GM13976 (cell line): ENCODE measurements at regions of chr4 and their contacts with region 1.

Region 1: DNA sequence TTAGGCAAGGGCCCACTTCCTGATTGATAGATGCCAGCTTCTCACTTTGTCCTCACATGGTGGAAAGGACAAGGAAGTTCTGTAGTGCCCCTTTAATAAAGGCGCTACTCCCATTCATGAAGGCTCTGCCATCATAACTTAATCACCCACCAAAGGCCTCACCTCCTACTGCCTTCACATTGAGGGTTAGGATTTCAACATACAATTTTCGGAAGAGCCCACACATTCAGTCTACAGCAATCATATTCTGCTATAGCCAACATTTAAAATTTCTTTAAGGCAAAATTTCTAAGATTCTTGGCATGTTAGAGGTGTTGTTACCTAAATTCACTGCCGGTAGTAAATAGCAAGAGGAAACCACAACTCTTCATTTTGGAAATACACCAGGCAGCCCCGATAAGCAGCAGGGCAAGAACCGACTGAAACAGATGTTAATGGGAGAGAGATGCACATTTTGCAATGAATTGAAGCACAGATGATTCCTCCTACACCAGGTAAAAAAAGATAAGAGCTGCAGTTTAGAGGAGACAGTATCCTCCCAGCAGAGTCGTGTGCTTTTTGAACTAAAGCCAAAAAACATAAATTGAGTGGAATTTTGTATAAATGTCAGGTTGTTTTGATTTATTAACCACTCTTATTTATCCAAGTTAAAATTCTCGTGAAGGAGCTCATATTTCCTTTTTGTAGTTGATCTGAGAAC is 594.9 kb downstream of the KCTD8 start:
- DNase-seq: no peak
- CTCF ChIP-seq: no peak

Region 2: DNA sequence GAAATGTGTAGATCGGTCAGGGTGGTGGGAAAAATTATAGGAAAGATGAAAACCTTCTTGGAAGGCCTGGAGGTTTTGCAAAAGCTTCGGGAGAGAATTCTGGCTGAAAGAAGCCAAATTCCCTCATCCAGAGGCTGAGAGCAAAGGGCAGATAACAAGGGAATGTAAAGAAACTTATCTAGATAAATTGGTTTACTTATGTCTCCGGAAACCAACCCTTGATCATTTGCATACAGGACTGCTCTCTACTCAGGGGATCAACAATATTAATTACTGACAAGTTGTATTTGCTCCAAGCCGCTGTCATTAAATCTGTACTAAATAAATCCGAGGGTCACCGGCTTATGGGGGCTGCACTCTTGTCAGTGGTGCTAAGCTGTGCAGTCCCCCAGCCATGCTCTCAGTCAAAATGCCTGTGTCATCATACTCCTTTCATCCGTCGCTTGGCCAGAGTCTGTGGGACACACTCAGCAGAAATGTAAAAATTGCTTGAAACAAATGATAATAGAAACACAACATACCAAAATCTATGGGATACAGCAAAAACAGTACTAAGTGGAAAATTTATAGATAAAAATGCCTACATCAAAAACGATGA is 120.8 kb before region 1 on chr4:
- in situ Hi-C with region 1: no loop called
- DNase-seq: no peak
- CTCF ChIP-seq: no peak

Region 3: DNA sequence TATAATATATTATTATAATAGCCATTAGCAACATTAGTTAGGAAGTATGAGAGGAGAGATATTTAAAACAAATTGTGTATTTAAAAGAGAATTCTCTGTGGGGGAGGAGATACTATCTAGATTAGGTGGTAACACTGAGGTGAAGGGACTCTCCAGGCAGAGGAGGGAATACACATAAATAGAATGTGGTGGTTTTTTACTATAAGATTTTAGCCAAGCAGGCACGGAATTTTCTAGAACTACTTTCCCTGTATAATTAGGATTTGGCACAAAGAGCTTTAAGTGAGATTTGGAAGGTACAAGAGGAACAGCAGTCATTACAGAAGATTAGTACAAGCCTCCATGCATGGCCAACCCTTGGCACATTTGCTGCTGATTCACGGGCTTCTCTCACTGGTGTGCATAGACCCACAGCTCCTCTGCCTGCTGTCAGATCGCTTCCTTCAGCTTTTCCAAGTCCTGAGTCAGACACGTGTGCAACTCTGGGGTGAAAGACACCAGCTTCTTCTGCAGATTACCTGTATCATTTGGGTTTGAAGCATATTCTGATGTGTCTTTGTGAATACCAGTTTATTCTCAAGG is 90.6 kb before region 1 on chr4:
- in situ Hi-C with region 1: loop called (anchors 25 kb)
- DNase-seq: no peak
- CTCF ChIP-seq: no peak